ENCODE measurements at regions of chr17 and their contacts with region 1.

Region 1: GRCh38 chr17:40399185-40399584 is 18.5 kb downstream of the TOP2A start:
- DNase-seq: peak in 1 of 2 experiments; percentile 48
- H3K4me3 ChIP-seq: no peak overlapping the region
- H3K27ac ChIP-seq: no peak overlapping the region
- H3K4me1 ChIP-seq: no peaks in the 10 kb centered on the region
- H3K27me3 ChIP-seq: no peaks in the 10 kb centered on the region
- CTCF ChIP-seq: peak; percentile 70

Region 2: DNA sequence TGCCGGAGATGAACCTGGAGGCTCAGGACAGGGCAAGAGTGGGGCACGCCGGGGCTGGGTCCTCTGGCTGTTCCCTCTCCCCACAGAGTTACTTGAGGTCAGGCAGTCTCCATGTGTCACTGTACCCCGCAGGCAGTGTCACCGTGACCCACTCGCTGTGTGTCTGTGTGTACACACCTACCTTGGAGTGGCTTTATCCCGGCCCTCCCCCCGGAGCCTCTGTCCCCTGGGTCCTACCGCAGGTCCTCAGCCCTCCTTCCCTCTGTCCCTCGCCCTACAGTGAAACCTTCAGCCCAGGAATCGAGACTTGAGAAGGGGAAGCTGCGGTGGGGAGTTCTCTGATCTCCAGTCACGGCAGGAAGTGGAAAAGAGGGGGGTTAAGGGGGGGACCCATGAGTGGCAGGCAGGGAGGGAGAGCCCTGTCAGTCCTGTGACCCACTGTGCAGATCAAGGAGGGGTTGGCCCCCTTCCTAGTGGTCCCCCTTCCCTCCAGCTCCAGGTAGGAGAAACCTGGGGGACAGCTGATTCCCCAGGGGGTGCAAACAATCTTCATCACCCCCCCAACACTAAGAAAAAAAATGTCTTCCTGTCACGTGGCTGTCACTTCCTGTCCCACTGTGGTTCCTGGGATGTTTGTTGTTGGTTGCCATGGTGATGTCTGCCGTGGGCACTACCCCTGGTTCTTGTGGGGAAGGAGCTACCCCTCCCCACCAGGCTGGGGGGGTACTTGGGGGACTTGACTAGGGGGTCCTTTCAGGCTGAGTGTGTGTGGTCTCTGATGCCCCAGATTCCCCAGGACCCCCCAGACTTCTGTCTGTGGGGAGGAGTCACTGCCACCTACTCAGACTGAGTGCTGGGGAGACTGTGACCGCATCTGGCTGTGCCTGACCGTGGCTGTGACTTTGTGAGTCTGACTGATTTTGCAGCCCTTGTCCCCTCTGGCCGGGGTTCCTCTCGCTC is 76.5 kb before region 1 on chr17:
- CTCF ChIA-PET with region 1: no interaction called
- POLR2A ChIA-PET with region 1: no interaction called
- intact Hi-C with region 1: no loop called
- DNase-seq: peak; percentile 53 to 59
- H3K4me3 ChIP-seq: peak overlapping the region; percentile 28; the same call in 1 of the 2 replicates
- H3K27ac ChIP-seq: peak overlapping the region; percentile 36
- H3K4me1 ChIP-seq: peaks cover 56% of the 10 kb centered on the region
- H3K27me3 ChIP-seq: no peaks in the 10 kb centered on the region
- CTCF ChIP-seq: no peak

Region 3: DNA sequence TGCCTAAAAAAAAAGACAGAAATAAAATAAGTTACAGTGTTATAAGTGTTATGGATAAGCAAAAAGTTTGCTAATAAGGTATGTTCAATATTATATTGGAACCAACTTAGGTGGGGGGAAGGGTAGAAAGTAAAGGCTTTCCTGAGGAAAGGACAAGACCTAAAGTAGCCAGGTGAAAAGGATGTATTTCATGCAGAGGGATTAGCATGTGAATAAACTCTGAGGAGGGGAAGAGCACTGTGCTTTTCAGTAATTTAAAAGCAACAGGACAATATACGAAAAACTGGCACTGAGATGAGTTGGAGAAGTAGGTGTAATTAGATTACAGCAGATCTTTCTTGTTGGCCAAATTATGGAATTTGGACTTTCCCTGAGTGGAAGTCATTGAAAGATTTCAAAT is 10.9 kb after region 1 on chr17:
- CTCF ChIA-PET with region 1: no interaction called
- POLR2A ChIA-PET with region 1: interaction called, 14 read pairs
- intact Hi-C with region 1: no loop called
- DNase-seq: no peak
- H3K4me3 ChIP-seq: no peak overlapping the region
- H3K27ac ChIP-seq: no peak overlapping the region
- H3K4me1 ChIP-seq: peaks cover under 1% of the 10 kb centered on the region; the same call in 1 of the 2 replicates
- H3K27me3 ChIP-seq: no peaks in the 10 kb centered on the region
- CTCF ChIP-seq: no peak

Region 4: GRCh38 chr17:40531051-40531991 is 132.1 kb after region 1 on chr17:
- CTCF ChIA-PET with region 1: no interaction called
- POLR2A ChIA-PET with region 1: no interaction called
- intact Hi-C with region 1: loop called (anchors 1 kb)
- DNase-seq: no peak
- H3K4me3 ChIP-seq: no peak overlapping the region
- H3K27ac ChIP-seq: no peak overlapping the region
- H3K4me1 ChIP-seq: peaks cover 35% of the 10 kb centered on the region
- H3K27me3 ChIP-seq: no peaks in the 10 kb centered on the region
- CTCF ChIP-seq: no peak

Region 5: DNA sequence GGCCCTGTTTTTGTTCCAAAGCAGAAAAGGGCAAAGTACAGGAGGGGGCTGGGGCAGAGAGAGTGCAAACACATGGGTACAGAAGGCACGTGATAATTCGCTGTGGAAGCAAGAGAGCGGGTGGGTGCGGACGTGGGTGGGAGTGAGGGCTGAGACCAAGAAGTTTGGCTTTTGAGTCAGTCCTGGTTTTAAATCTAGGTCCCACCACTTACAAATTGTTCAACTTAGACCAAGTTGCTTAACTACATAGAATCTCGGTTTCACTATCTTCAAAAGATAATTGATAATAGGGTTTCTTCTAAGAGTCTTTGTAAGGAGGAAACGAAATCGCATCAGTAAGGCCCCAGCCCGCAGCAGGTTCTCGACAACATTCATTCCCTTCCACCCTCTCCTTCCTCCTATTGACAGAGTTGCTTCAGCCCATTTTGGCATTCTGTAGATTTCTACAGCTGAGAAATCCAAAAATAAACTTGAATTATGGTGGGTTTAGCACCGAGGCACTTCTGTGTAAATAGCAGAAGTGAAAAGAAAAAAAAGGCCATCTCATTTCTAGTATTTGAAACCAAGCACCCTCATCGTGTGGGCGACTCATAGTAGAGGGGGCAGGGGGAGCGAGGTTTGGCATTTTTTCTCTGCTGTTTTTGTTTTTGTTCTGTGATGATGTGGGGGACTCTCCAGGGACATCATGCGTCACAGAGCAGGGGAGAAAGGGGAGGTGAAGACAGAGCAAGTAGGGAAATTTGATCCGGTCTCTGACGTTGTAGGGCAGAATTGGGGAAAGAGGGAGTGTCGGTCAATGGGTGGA is 199.7 kb after region 1 on chr17:
- CTCF ChIA-PET with region 1: no interaction called
- POLR2A ChIA-PET with region 1: no interaction called
- intact Hi-C with region 1: no loop called
- DNase-seq: no peak
- H3K4me3 ChIP-seq: no peak overlapping the region
- H3K27ac ChIP-seq: no peak overlapping the region
- H3K4me1 ChIP-seq: peaks cover 8% of the 10 kb centered on the region
- H3K27me3 ChIP-seq: no peaks in the 10 kb centered on the region
- CTCF ChIP-seq: no peak